ENCODE measurements at regions of chr6 and their contacts with region 1.

Region 1: GRCh38 chr6:148457137-148457842 is 114.7 kb downstream of the SASH1 start:
- DNase-seq: no peak
- ATAC-seq: peak; percentile 84
- H3K4me3 Mint-ChIP-seq: no peak overlapping the region
- H3K27ac Mint-ChIP-seq: peak overlapping the region; percentile 38
- H3K4me1 Mint-ChIP-seq: peaks cover 7% of the 10 kb centered on the region
- H3K27me3 Mint-ChIP-seq: peaks cover 7% of the 10 kb centered on the region

Region 2: GRCh38 chr6:148203970-148204369 is 253.3 kb before region 1 on chr6:
- CTCF ChIA-PET with region 1: no interaction called
- POLR2A ChIA-PET with region 1: no interaction called
- intact Hi-C with region 1: loop called in 1 of 2 experiments (anchors 1 kb)
- DNase-seq: peak; percentile 85
- ATAC-seq: peak; percentile 88
- H3K4me3 Mint-ChIP-seq: peak overlapping the region; percentile 66
- H3K27ac Mint-ChIP-seq: peak overlapping the region; percentile 59
- H3K4me1 Mint-ChIP-seq: peaks cover 38% of the 10 kb centered on the region
- H3K27me3 Mint-ChIP-seq: peaks cover 75% of the 10 kb centered on the region

Region 3: DNA sequence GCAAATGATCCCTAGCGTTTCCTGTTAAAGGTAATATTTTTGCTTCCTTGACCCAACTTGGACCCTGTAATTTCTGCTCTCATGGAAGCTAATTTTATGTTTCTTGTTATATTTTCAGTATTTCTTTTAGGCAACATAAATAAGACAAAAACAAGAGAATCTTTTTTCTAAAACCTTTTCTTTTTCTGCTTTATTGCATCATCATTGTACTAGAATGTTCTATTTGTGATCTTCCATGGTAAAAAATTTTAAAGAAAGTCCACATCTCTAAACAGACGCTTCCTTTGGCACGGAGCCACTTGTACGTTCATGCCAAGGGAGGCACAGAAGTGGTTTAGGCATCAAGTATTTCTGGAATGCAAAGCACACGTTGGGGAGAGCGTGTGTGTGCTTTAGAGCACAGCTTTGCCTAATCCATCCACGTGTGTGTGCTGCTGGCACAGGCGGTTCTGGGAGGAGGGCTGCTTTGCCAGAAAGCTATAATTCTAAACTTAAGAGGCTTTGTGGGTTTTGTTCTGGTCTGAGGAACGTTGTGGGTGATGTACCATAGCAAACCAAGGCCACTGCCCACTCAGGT is 16.3 kb before region 1 on chr6:
- CTCF ChIA-PET with region 1: no interaction called
- POLR2A ChIA-PET with region 1: no interaction called
- intact Hi-C with region 1: loop called in 1 of 2 experiments (anchors 1 kb)
- DNase-seq: no peak
- ATAC-seq: no peak
- H3K4me3 Mint-ChIP-seq: no peak overlapping the region
- H3K27ac Mint-ChIP-seq: no peak overlapping the region
- H3K4me1 Mint-ChIP-seq: peaks cover 15% of the 10 kb centered on the region
- H3K27me3 Mint-ChIP-seq: peaks cover 18% of the 10 kb centered on the region

Region 4: DNA sequence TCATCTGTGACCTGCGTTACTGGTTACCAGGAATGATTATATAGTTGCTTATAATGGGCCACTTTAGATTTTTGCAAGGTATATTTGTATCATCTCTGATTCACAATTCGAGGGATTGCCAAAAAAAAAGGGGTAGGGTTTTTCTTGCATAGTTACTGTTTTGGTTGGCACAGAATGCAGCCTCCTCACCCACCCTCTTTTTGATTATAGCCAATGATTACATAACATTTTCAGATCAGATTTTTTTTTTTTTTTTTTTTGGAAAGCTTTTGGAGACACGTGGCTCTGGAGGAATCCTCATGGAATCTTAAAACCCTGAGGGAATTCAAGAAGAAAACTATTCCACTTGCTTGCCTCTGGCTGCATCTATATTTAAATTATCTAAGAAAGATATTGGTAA is 343.2 kb after region 1 on chr6:
- CTCF ChIA-PET with region 1: no interaction called
- POLR2A ChIA-PET with region 1: no interaction called
- intact Hi-C with region 1: no loop called
- DNase-seq: no peak
- ATAC-seq: no peak
- H3K4me3 Mint-ChIP-seq: no peak overlapping the region
- H3K27ac Mint-ChIP-seq: no peak overlapping the region
- H3K4me1 Mint-ChIP-seq: peaks cover 3% of the 10 kb centered on the region
- H3K27me3 Mint-ChIP-seq: peaks cover 6% of the 10 kb centered on the region